ENCODE measurements at regions of chr4 and their contacts with region 1.

Region 1: DNA sequence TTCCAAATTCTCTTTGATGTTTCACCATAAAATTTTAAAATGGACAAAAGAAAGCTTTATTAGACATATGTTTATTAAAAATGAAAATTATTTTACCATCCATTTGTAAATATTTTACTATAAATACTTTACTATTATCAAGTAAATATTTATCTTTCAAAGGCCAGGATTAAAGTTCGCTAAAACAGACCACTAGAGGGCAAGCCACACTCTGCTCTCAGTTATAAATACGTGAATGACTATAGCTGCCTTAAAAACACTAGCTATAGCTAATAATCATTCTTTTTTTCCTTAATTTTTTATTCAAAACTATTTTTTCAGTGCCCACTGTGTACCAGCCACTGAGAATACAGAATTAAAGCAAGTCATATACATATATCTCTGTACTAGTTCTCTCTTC is 38.6 kb downstream of the UNC5C start:
- DNase-seq: no peak
- H3K4me3 ChIP-seq: no peak overlapping the region
- H3K4me3 Mint-ChIP-seq: no peak overlapping the region
- H3K27ac ChIP-seq: no peak overlapping the region
- H3K27ac Mint-ChIP-seq: no peak overlapping the region
- H3K4me1 ChIP-seq: no peaks in the 10 kb centered on the region
- H3K4me1 Mint-ChIP-seq: no peaks in the 10 kb centered on the region
- H3K27me3 ChIP-seq: no peaks in the 10 kb centered on the region
- H3K27me3 Mint-ChIP-seq: no peaks in the 10 kb centered on the region

Region 2: DNA sequence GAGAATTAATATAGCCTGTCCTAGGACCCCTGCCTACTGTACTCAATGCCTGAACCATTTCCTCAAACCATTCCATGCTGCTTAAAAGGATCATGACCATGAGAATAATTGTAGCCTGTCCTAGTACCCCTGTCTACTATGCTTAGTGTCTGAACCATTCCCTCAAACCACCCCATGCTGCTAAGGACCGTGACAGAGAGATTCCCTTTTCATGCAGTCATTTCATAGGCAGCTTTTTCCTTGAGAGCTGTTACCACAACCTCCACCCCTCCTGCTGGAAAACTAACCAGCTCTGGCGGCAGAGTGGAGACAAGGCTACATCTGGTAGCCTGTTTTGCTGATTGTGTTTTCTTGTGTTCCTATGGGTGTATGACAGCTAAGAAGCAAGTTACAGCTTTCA is 1477.4 kb before region 1 on chr4:
- CTCF ChIA-PET with region 1: no interaction called
- POLR2A ChIA-PET with region 1: no interaction called
- intact Hi-C with region 1: no loop called
- DNase-seq: no peak
- H3K4me3 ChIP-seq: no peak overlapping the region
- H3K4me3 Mint-ChIP-seq: no peak overlapping the region
- H3K27ac ChIP-seq: no peak overlapping the region
- H3K27ac Mint-ChIP-seq: no peak overlapping the region
- H3K4me1 ChIP-seq: no peaks in the 10 kb centered on the region
- H3K4me1 Mint-ChIP-seq: no peaks in the 10 kb centered on the region
- H3K27me3 ChIP-seq: no peaks in the 10 kb centered on the region
- H3K27me3 Mint-ChIP-seq: peaks cover 0 to 2% of the 10 kb centered on the region in 2 donors

Region 3: DNA sequence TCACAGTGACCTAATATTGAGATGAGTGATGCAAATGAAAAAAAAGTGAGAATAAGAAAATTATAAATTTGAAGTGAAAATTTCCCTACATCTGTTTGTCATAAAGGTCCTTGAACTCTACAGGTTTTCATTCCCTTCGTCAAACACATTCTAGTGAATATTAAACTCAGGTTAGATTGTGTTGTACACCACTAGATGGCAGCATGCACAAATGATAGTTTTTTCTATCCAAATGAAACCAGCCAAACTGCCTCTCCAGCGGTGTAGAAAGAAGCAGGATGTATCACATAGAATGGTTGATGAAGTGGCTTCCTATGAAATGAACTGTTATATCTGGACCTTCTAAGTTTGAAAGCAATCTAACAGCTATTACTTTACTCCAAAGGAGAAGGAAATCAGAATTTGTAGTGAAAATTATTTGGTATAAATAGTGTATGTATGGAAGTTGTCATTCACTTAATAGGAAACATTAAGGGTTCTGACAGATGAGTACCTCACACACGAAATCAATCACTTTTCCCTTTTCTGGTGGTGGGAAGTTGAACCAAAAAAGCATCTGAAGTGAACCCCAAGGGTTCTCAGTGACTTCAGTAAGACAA is 344.1 kb before region 1 on chr4:
- CTCF ChIA-PET with region 1: no interaction called
- POLR2A ChIA-PET with region 1: no interaction called
- intact Hi-C with region 1: loop called (anchors 10 kb)
- DNase-seq: peak; percentile 40 to 64 (median 54)
- H3K4me3 ChIP-seq: no peak overlapping the region
- H3K4me3 Mint-ChIP-seq: no peak overlapping the region
- H3K27ac ChIP-seq: no peak overlapping the region
- H3K27ac Mint-ChIP-seq: no peak overlapping the region
- H3K4me1 ChIP-seq: no peaks in the 10 kb centered on the region
- H3K4me1 Mint-ChIP-seq: peaks cover 0 to 2% (median 0%) of the 10 kb centered on the region in 4 donors
- H3K27me3 ChIP-seq: no peaks in the 10 kb centered on the region
- H3K27me3 Mint-ChIP-seq: peaks cover 2 to 4% of the 10 kb centered on the region in 2 donors

Region 4: GRCh38 chr4:95362906-95363558 is 147.1 kb before region 1 on chr4:
- CTCF ChIA-PET with region 1: no interaction called
- POLR2A ChIA-PET with region 1: no interaction called
- intact Hi-C with region 1: no loop called
- DNase-seq: no peak
- H3K4me3 ChIP-seq: no peak overlapping the region
- H3K4me3 Mint-ChIP-seq: no peak overlapping the region
- H3K27ac ChIP-seq: no peak overlapping the region
- H3K27ac Mint-ChIP-seq: no peak overlapping the region
- H3K4me1 ChIP-seq: no peaks in the 10 kb centered on the region
- H3K4me1 Mint-ChIP-seq: no peaks in the 10 kb centered on the region
- H3K27me3 ChIP-seq: no peaks in the 10 kb centered on the region
- H3K27me3 Mint-ChIP-seq: no peaks in the 10 kb centered on the region

Region 5: GRCh38 chr4:95556207-95556859 is 46.2 kb after region 1 on chr4:
- CTCF ChIA-PET with region 1: no interaction called
- POLR2A ChIA-PET with region 1: no interaction called
- intact Hi-C with region 1: no loop called
- DNase-seq: no peak
- H3K4me3 ChIP-seq: no peak overlapping the region
- H3K4me3 Mint-ChIP-seq: no peak overlapping the region
- H3K27ac ChIP-seq: no peak overlapping the region
- H3K27ac Mint-ChIP-seq: no peak overlapping the region
- H3K4me1 ChIP-seq: no peaks in the 10 kb centered on the region
- H3K4me1 Mint-ChIP-seq: no peaks in the 10 kb centered on the region
- H3K27me3 ChIP-seq: no peaks in the 10 kb centered on the region
- H3K27me3 Mint-ChIP-seq: peaks cover 2% of the 10 kb centered on the region in 2 donors

Region 6: GRCh38 chr4:95715830-95716229 is 205.7 kb after region 1 on chr4:
- CTCF ChIA-PET with region 1: no interaction called
- POLR2A ChIA-PET with region 1: no interaction called
- intact Hi-C with region 1: no loop called
- DNase-seq: no peak
- H3K4me3 ChIP-seq: no peak overlapping the region
- H3K4me3 Mint-ChIP-seq: no peak overlapping the region
- H3K27ac ChIP-seq: no peak overlapping the region
- H3K27ac Mint-ChIP-seq: no peak overlapping the region
- H3K4me1 ChIP-seq: no peaks in the 10 kb centered on the region
- H3K4me1 Mint-ChIP-seq: no peaks in the 10 kb centered on the region
- H3K27me3 ChIP-seq: no peaks in the 10 kb centered on the region
- H3K27me3 Mint-ChIP-seq: peaks cover 0 to 2% of the 10 kb centered on the region in 2 donors

Measured in CD4-positive, alpha-beta memory T cell (primary cell).